Left cardiac atrium (tissue), 4 donors: ENCODE measurements at regions of chr5 and their contacts with region 1.

Region 1: DNA sequence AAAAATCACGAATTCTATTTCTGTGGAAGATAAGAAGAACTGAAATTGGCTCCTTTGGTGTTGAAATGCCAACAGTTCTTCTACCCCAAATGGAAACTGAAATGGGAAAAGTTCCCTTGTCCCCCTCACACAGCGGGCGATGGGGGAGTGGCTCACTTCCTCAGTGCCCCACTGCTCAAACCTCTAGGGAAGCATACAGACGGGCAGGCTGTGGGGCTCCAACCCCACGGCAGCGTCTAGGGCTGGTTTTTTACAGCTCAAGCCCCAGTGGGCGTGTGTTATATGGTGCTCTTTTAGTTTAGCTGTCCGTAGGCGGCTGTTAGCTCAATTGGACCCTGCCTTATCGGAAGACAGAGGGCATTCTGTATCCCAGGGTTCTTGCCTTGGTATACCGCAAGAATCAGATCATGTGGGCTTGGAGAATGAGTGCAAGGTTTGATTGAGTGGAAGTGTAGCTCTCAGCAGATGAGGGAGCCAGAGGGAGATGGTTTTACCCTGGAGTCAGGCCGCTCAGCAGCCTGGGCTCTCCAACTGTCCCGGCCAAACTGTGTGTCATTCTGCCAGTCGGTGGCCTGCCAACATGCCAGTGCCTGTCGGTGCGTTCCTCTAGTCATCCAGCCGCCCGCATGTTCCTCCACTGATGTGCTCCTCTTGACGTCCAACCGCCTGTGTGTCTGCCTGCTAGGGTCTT is 166.3 kb upstream of the ZNF608 start:
- DNase-seq: no peak
- ATAC-seq: peak in 1 of 2 donors; percentile 44

Region 2: DNA sequence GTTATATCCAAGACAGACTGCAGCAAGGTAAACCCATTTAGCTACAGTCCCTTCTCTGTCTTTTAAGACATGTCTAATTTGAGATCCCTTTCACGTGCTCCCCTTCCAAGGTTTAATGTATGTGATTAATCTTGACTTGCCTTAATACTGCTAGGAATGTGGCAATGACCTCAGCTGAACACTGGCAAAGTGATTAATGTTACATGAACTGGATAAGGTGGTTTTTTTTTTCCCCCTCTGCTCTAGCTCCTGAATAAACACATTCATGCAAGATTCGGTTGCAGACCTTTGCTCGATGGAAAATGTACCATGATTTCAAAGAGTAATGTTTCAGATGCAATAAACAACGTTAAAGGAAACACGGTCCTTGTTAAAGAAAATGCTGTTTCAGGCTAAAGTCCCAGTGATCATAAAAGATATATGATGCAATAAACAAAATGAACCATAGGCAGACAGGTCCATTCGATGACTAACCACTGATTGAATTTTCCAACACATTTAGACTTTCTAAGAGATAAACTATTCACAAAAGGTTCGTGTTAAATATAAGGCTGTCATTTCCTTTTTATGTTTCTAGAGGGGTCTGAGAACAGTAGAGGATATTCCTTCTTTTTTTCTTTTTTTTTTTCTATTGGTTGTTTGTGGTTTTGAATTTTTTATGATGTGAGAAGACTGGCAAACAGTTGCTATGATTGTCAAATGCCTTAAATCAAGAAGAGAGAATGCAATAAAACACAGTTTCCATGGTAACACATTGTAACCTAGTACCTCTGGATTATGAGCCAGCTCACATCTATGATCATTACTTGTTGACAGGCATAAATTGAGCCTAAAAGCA is 121.7 kb before region 1 on chr5:
- intact Hi-C with region 1: no loop called
- DNase-seq: no peak
- ATAC-seq: no peak

Region 3: DNA sequence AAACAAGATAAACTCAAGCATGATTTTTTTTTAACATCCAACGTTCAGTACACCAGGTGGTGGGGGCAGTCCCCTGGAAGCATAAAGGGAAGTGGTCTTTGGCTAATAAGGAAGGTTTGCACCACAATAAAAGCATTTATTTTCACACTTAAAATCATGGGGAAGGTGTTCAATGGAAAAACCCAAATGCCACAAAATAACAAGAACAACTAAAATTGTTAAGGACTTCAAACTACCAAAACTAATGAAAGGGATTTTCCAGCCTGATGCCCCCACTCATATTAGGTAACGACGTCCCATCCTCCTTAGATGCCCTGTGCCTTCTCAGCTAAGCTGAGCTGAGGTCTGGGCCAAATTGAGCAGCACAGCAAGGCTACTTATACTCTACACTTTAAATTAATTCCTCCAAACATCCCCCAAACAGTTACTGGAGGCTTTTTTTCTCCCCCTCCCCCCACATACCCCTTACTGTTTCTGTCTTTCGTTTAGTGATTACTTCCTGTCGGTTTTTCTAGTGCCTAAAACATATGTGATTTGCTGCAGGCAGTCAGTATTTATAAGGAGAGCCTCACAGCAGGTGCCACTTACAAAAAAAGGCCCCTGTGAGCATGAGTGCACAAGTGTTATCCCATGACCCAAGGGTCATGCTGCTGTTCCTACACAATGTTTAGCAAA is 93.4 kb after region 1 on chr5:
- intact Hi-C with region 1: loop called in 1 of 2 experiments (anchors 10 kb)
- DNase-seq: no peak
- ATAC-seq: no peak